Posterior vena cava (tissue), 2 donors: ENCODE measurements at regions of chr16 and their contacts with region 1.

Region 1: GRCh38 chr16:30628627-30629540 is 18.7 kb upstream of the ZNF689 start:
- DNase-seq: peak; percentile 95

Region 2: DNA sequence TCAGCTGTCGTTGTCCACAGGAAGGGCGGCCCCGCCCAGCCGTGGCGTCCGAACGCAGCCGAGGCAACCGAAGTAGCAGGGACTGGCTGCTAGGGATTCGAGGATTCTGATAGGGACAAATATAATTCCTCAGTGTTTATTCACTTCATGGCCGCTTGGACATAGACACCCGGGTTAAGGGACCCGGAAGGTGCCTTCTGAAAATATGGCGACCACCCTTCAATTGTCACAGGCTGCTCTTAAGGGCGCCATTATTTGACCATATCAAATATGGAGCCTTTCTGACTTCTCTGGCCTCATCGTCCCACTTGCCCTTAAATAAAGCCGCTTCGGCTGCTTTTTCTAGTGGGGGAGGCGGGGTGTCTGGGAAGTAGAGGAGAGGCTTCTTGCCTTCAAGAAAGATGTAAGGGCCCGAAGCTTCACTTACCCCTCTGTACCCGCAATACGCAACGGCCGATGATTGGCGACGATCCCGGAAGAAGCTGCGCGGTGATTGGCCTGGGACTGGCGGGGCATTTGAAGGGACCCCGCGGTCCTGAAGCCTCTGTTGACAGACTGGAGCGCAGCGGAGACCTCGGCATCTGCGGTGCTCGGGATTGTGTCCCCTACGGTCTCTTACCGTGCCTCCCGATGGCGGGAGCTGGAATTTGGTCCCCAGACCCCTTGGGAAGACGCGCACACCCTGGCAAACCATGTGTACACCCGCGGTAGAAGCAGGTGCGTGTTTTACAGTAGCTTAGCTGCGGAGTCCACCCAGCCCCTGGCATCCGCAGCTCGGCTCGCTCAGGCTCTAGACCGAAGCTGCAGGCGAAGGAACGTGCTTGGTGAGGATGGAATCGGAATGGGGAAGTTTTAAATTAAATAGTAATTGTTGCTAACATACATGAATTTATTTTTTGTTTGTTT is 56.9 kb before region 1 on chr16 and contains the start of gene ZNF688:
- intact Hi-C with region 1: no loop called
- DNase-seq: peak; percentile 99
- total RNA-seq, gene ZNF688: 8.8 to 10.8 TPM

Region 3: GRCh38 chr16:30609926-30610839 is 18.7 kb before region 1 on chr16 and contains the start of gene ZNF689:
- intact Hi-C with region 1: loop called in 1 of 2 experiments (anchors 1 kb)
- DNase-seq: peak; percentile 97
- total RNA-seq, gene ZNF689: 6.9 to 7.1 TPM

Region 4: GRCh38 chr16:30677931-30678585 is 49.2 kb after region 1 on chr16:
- intact Hi-C with region 1: loop called in 1 of 2 experiments (anchors 5 kb)
- DNase-seq: no peak

Region 5: GRCh38 chr16:31344712-31345111 is 715.8 kb after region 1 on chr16:
- intact Hi-C with region 1: no loop called
- DNase-seq: no peak